ENCODE measurements at regions of chrX and their contacts with region 1.

Region 1: GRCh38 chrX:47523297-47523696 is 37.7 kb upstream of the ARAF start:
- DNase-seq: peak; percentile 69
- H3K4me3 Mint-ChIP-seq: peak overlapping the region; percentile 72
- H3K27ac Mint-ChIP-seq: no peak overlapping the region
- H3K4me1 Mint-ChIP-seq: peaks cover 4% of the 10 kb centered on the region
- H3K27me3 Mint-ChIP-seq: peaks cover 2% of the 10 kb centered on the region

Region 2: GRCh38 chrX:47384502-47384901 is 138.8 kb before region 1 on chrX:
- intact Hi-C with region 1: loop called (anchors 2 kb)
- DNase-seq: peak; percentile 46
- H3K4me3 Mint-ChIP-seq: no peak overlapping the region
- H3K27ac Mint-ChIP-seq: no peak overlapping the region
- H3K4me1 Mint-ChIP-seq: peaks cover 16% of the 10 kb centered on the region
- H3K27me3 Mint-ChIP-seq: no peaks in the 10 kb centered on the region

Measured in activated T-helper 2 cell treated with anti-CD3 and anti-CD28 coated beads, Interferon-gamma antibody, Interleukin-2, Interleukin-4, amounts not matched to agents 10 μg/mL and 5 μg/mL and 100 μg/mL, durations not matched to agents 14 hours and 24 hours and 36 hours (primary cell).